ENCODE measurements at regions of chr21 and their contacts with region 1.

Region 1: GRCh38 chr21:26715878-26716506 is 129.2 kb downstream of the ADAMTS1 start:
- H3K4me3 Mint-ChIP-seq: no peak overlapping the region
- H3K27ac Mint-ChIP-seq: no peak overlapping the region
- H3K4me1 Mint-ChIP-seq: no peaks in the 10 kb centered on the region
- H3K27me3 Mint-ChIP-seq: no peaks in the 10 kb centered on the region

Region 2: DNA sequence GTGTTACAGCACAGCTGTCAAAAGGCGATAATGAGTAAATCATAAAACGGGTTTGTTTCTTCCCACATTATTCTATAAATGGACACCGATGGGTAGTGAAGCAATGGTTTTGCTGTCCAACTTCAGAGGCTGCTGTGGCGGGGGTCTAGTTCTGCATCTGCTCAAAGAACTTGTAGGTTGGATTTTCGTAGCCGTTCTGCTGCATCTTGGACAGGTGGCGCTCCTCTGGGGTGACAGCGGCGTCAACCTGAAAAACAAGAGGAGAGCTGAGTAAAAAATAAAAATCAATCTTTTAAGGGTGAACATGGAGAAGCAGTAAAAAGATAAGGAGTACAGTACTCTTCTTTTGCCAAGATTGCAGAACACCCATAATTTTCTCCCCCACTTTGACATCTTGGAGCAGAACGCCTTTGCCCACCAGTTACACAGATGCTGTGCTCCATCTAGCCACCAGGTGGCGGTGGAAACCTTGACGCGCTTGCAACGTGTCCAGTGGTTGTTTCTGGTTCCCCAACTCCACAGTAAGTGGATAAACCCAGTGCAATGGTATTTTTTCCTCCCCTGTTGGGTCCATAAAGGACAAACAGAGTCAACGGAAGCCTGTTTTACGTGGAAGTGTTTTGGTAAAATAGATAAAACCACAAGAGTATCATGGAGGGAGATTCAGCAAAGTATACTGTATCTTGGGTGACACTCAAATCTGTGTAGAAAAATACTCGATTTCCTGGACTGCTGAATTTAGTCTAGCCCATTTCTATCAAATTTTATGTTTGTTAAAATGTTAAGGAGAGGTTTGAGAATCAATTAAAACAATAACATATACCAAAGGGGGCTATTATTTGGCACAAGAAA is 834.2 kb before region 1 on chr21:
- intact Hi-C with region 1: loop called (anchors 2 kb)
- H3K4me3 Mint-ChIP-seq: no peak overlapping the region
- H3K27ac Mint-ChIP-seq: no peak overlapping the region
- H3K4me1 Mint-ChIP-seq: no peaks in the 10 kb centered on the region
- H3K27me3 Mint-ChIP-seq: no peaks in the 10 kb centered on the region

Region 3: GRCh38 chr21:25895565-25896205 is 820.3 kb before region 1 on chr21:
- intact Hi-C with region 1: loop called (anchors 5 kb)
- H3K4me3 Mint-ChIP-seq: no peak overlapping the region
- H3K27ac Mint-ChIP-seq: no peak overlapping the region
- H3K4me1 Mint-ChIP-seq: peaks cover 6% of the 10 kb centered on the region
- H3K27me3 Mint-ChIP-seq: no peaks in the 10 kb centered on the region

Region 4: DNA sequence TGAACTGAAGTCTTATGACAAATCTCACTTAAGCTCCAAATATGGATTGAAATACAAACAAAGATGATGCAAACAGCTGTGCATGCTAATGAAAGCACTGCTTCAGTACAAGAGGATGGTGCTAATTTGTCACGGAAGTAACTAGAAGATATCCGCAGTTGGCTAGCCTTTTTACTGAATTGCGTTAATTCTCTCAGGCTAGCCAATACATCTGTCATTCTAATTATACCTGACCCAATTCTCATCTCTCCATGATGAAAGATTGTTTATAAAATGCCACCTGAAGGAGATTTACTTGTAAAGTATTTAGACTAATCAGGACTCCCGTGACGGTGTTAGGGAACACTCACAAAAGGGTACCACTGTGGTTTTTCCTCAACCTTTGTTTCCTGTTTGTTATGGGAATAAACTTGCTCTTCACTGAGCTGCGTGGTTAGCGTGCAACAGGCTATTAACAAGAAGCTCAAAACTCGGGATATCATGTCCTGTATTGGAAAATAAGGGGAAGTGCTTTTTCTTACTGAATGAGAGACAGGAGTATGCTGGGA is 708.0 kb before region 1 on chr21:
- intact Hi-C with region 1: no loop called
- H3K4me3 Mint-ChIP-seq: no peak overlapping the region
- H3K27ac Mint-ChIP-seq: no peak overlapping the region
- H3K4me1 Mint-ChIP-seq: no peaks in the 10 kb centered on the region
- H3K27me3 Mint-ChIP-seq: no peaks in the 10 kb centered on the region

Measured in dendritic cell treated with granulocyte-macrophage colony-stimulating factor and Interleukin-4, amounts not matched to agents 40 ng/mL and 50 ng/mL, for 4 days (primary cell).